ENCODE measurements at regions of chr2 and their contacts with region 1.

Region 1: DNA sequence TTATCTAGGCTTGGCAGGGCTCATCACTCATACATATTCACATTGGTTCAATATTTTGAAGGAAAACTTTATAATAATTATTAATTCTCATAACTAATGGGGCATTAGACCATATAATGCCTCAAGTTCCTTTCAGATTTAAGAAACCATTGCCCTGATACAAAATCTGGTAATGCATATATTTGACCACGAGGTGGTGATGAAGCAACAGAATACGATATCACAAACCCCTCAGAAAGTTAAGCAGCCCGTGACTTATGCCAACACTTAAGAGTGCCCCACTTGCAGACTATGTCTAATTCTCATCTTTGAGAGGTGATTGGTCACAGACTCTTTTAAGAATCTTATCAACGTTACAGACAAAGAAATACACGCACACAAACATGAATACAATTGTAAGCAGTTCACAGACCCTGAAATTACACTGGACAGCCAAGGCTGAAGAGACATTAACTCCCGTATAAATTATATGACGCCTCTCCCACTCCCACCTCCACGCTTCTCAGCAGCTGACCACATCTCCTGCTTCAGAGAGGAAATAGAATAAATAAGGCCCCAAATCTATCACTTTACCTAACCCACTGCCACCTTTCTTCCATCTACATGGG is 20.7 kb upstream of the DNAH6 start:
- DNase-seq: no peak
- ATAC-seq: peak; percentile 73

Region 2: DNA sequence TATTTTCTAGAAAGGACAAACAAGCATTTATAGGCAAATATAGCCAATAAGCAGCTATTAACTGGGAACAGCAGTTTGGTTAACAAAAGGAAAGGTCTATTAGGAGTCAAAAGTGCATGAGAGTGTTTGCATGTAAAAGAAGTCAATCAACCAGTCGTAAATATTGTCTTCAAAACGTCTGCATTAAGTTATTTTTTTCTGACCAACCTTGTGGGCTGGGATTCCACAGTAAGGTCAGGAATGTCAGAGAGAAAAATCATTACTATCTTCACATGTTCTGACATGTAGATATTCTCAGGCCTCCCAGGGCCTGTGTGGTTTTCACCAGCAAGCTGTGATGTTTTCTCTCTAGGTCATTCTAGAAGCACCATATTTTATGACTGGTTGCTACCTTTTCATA is 959.1 kb before region 1 on chr2:
- intact Hi-C with region 1: no loop called
- DNase-seq: no peak
- ATAC-seq: no peak

Region 3: DNA sequence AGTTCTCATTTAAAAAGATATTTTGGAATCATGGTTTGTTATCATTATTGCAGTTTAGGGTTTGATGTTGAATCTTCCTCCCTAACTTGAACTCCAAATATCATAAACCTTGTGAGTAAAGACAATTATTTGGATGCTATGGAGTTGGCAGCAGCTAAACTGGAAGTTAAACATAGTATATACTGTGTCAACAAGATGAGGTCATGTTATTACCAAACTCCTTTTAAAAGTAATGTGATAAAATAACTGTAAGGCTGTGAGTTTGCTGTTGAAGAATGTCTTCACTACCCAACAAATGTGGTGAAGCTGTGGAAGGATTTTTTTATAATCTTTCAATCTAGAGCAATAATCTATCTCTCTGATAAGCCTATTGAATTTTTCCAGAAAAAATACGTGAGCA is 36.6 kb after region 1 on chr2:
- intact Hi-C with region 1: no loop called
- DNase-seq: no peak
- ATAC-seq: no peak

Region 4: DNA sequence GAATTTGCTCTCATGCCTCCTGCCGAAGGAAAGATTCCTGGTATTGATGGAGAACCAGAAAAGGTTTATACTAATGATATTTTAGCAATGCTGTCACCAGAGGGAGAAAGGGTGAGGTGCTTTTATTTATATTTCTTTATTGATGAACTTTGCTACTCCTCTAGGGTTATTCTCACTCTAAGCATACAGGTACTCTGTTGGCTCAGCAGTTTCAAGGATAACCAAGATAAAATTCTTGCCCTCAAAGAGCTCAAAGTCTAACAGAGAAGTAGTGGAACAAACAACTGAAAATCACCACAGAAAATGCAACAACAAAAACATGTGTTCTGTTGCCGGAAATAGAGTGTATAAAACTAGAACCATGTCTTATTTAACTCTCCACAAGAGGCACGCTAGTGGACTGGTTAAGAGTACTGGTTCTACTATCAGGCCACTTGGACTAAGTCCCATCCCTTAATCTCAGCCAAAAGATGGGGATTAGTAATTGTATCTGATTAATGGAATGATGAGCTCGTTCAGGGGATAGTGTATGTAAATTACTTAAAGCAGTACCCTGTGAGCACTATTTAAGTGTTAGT is 124.2 kb after region 1 on chr2:
- intact Hi-C with region 1: loop called (anchors 10 kb)
- DNase-seq: no peak
- ATAC-seq: no peak

Region 5: GRCh38 chr2:84713441-84713840 is 217.8 kb after region 1 on chr2:
- intact Hi-C with region 1: no loop called
- DNase-seq: no peak
- ATAC-seq: no peak

Region 6: GRCh38 chr2:84856787-84857186 is 361.1 kb after region 1 on chr2:
- intact Hi-C with region 1: loop called (anchors 5 kb)
- DNase-seq: no peak
- ATAC-seq: no peak

Region 7: GRCh38 chr2:84881581-84882414 is 386.2 kb after region 1 on chr2:
- intact Hi-C with region 1: loop called (anchors 5 kb)
- DNase-seq: peak; percentile 82
- ATAC-seq: peak; percentile 91

Measured in left ventricle myocardium superior (tissue), 1 donor.